Aorta (tissue), 5 donors: ENCODE measurements at regions of chr2 and their contacts with region 1.

Region 1: GRCh38 chr2:111116843-111117597 is 3.7 kb upstream of the BCL2L11 start:
- DNase-seq: peak; percentile 79 to 89
- ATAC-seq: peak; percentile 75
- H3K4me3 ChIP-seq: peak overlapping the region in 1 of 2 donors; percentile 12
- H3K27ac ChIP-seq: no peak overlapping the region
- H3K4me1 ChIP-seq: no peaks in the 10 kb centered on the region
- H3K27me3 ChIP-seq: peaks cover 0 to 2% of the 10 kb centered on the region in 2 donors

Region 2: DNA sequence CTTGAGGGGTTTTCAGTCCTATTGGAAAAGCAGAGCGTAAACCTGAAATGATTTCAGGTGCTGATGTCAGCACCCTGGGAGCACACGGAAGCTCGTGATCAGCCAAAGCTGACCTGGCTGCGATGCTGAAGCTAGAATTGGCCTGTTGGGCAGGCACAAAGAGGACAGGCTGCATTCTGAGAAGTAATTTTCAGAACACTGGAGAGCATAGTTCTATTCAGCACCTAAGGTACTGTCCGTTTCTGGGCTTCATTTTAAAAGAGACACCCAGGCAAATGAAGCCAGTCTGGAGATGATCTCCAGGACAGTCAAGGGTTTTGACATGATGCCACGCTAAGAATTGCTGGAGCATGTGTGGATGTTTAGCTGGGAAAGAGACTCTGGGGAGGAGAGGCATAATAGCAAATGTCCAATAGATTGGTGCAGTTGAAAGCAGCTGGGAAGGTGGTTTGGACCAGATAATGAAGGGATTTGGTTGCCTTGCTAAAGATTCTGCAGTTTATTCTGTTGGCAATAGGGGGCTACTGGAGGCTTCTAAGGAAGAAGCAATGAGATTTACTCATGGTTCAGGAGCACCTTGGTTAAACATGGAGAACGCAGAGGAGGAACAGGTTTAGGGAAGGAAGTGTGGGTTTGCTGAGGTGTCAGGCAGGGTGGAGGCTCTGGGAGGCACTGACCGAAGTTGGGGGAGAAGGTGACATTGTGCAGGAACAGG is 298.1 kb before region 1 on chr2:
- intact Hi-C with region 1: loop called in 1 of 2 experiments (anchors 10 kb)
- DNase-seq: no peak
- ATAC-seq: no peak
- H3K4me3 ChIP-seq: no peak overlapping the region
- H3K27ac ChIP-seq: no peak overlapping the region
- H3K4me1 ChIP-seq: no peaks in the 10 kb centered on the region
- H3K27me3 ChIP-seq: no peaks in the 10 kb centered on the region